ENCODE measurements at regions of chr10 and their contacts with region 1.

Region 1: GRCh38 chr10:34732926-34733325 is 82.2 kb downstream of the PARD3 start:
- H3K4me3 ChIP-seq: no peak overlapping the region
- H3K27ac ChIP-seq: no peak overlapping the region
- H3K4me1 ChIP-seq: peaks cover 43% of the 10 kb centered on the region
- CTCF ChIP-seq: no peak

Region 2: DNA sequence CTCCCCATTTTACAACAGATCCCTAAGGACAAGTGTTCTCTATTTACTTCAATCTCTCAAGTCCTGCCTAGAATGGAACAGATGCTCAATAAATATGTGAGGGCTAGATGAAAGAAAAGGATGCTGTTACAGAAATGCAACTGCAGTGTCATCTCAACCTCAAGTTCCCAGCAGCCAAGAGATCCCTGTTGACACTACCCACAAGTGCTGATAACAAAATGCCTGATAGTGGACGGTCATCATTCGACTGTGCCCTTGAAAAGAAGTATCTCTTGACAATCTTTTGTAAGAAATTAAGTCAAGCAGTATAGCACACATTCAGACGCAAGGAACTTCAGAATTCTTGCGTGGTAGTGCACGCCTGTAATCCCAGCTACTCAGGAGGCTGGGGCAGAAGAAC is 51.0 kb before region 1 on chr10:
- CTCF ChIA-PET with region 1: interaction called, 12 read pairs
- POLR2A ChIA-PET with region 1: no interaction called
- H3K4me3 ChIP-seq: no peak overlapping the region
- H3K27ac ChIP-seq: no peak overlapping the region
- H3K4me1 ChIP-seq: peaks cover 7% of the 10 kb centered on the region
- CTCF ChIP-seq: no peak

Region 3: DNA sequence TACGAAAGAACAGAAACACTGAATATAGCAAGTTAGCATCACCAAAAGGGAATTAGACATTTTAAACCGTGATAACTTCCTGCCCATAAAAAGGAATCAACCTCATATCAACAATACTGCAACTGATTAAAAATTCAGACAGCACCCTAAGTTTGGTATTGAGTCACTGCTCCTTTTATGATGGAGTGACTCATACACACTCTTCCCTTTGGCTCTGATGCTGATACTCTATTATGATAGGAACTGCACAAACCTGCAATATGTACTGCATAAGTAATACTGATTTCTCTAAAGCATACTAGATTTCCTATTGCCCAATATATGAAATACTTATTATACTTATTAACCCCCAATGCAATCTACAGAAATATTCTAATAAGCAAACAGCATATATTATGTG is 36.5 kb before region 1 on chr10:
- CTCF ChIA-PET with region 1: no interaction called
- POLR2A ChIA-PET with region 1: no interaction called
- H3K4me3 ChIP-seq: no peak overlapping the region
- H3K27ac ChIP-seq: no peak overlapping the region
- H3K4me1 ChIP-seq: peaks cover 10% of the 10 kb centered on the region; the same call in 1 of the 2 replicates
- CTCF ChIP-seq: no peak

Region 4: GRCh38 chr10:34715511-34716187 is 17.3 kb before region 1 on chr10:
- CTCF ChIA-PET with region 1: no interaction called
- POLR2A ChIA-PET with region 1: no interaction called
- H3K4me3 ChIP-seq: no peak overlapping the region
- H3K27ac ChIP-seq: no peak overlapping the region
- H3K4me1 ChIP-seq: peaks cover 6% of the 10 kb centered on the region; the same call in 1 of the 2 replicates
- CTCF ChIP-seq: no peak

Region 5: DNA sequence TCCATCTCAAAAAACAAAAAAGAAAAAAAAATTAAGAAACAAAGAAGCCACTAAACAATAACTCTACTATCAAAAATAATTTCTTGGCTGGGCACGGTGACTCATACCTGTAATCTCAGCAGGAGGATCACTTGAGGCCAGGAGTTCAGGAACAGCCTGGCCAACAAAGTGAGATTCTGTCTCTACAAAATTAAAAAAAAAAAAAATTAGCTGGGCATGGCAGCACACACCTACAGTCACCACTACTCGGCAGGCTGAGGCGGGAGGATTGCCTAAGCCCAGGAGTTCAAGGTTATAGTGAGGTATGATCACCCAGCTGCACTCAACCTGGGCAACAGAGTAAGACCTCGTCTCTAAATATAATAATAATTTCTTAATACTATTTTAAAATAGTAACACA is 13.2 kb after region 1 on chr10:
- CTCF ChIA-PET with region 1: interaction called, 10 read pairs
- POLR2A ChIA-PET with region 1: no interaction called
- H3K4me3 ChIP-seq: no peak overlapping the region
- H3K27ac ChIP-seq: no peak overlapping the region
- H3K4me1 ChIP-seq: peaks cover 5% of the 10 kb centered on the region
- CTCF ChIP-seq: no peak